ENCODE measurements at regions of chr18 and their contacts with region 1.

Region 1: DNA sequence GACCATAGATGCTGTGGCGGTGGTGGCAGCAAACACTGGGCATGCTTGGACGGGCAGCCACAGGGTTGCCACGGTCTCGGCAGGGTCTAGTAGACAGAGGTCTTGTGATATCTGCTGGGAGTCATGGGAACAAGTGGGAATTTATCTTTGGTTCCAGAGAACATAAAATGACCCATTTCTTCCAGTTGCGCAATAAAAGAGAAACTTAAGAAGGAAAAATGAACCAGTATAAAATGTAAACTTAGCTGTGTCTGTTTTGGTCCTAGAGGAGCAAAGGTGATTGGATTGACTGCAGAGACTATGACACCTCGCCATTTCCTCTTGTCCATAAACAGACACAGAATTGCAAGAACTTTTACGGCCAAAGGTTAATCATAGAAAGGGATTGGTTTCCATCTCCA is 132.6 kb upstream of the RBBP8 start:
- DNase-seq: no peak
- ATAC-seq: no peak
- H3K4me3 ChIP-seq: no peak overlapping the region
- H3K4me3 Mint-ChIP-seq: no peak overlapping the region
- H3K27ac ChIP-seq: no peak overlapping the region
- H3K27ac Mint-ChIP-seq: no peak overlapping the region
- H3K4me1 ChIP-seq: no peaks in the 10 kb centered on the region
- H3K4me1 Mint-ChIP-seq: no peaks in the 10 kb centered on the region
- H3K27me3 ChIP-seq: no peaks in the 10 kb centered on the region
- H3K27me3 Mint-ChIP-seq: peaks cover 6% of the 10 kb centered on the region
- CTCF ChIP-seq: no peak

Region 2: DNA sequence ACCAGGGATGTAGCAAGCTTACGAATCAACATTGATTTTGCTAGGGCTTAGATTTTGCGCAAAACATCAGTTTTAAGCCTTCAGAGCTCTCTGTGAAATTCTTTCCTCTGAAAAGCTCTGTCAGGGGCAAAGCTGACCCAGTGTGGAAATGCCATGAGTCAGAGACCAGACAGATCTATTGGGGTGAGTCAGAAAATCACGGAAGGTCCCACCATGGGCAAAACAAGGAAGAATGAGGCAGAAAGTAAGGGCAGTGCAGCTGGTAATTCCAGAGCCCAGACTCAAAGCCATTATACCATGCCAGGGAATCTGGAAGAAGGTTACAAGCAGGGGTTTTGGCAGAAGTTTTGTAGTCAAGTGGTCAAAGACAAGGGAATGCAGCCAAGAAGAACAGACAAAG is 126.3 kb before region 1 on chr18:
- CTCF ChIA-PET with region 1: no interaction called
- POLR2A ChIA-PET with region 1: no interaction called
- intact Hi-C with region 1: no loop called
- DNase-seq: no peak
- ATAC-seq: no peak
- H3K4me3 ChIP-seq: no peak overlapping the region
- H3K4me3 Mint-ChIP-seq: no peak overlapping the region
- H3K27ac ChIP-seq: no peak overlapping the region
- H3K27ac Mint-ChIP-seq: no peak overlapping the region
- H3K4me1 ChIP-seq: no peaks in the 10 kb centered on the region
- H3K4me1 Mint-ChIP-seq: no peaks in the 10 kb centered on the region
- H3K27me3 ChIP-seq: no peaks in the 10 kb centered on the region
- H3K27me3 Mint-ChIP-seq: no peaks in the 10 kb centered on the region
- CTCF ChIP-seq: no peak

Region 3: DNA sequence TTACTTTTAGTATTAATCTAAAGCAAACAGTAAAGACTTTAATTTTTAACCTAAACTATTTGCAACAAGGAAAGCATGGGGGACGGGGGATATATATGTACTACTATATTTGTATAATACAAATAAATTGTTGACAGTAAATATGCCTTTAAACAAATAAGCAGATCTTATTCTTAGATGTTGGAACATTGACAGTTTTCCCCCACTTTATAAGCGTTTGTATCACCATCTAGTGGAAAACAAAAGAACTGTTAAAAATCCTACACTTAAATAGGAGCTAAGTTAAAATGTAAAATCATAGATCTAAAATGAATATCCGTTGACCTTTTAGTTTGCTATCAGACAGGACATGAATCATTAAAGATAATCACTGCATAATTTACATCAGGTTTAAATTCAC is 182.6 kb after region 1 on chr18:
- CTCF ChIA-PET with region 1: interaction called, 9 read pairs
- POLR2A ChIA-PET with region 1: no interaction called
- intact Hi-C with region 1: loop called (anchors 1 to 2 kb)
- DNase-seq: peak in 2 of 9 experiments; percentile 22 to 50
- ATAC-seq: no peak
- H3K4me3 ChIP-seq: no peak overlapping the region
- H3K4me3 Mint-ChIP-seq: no peak overlapping the region
- H3K27ac ChIP-seq: no peak overlapping the region
- H3K27ac Mint-ChIP-seq: no peak overlapping the region
- H3K4me1 ChIP-seq: no peaks in the 10 kb centered on the region
- H3K4me1 Mint-ChIP-seq: no peaks in the 10 kb centered on the region
- H3K27me3 ChIP-seq: no peaks in the 10 kb centered on the region
- H3K27me3 Mint-ChIP-seq: no peaks in the 10 kb centered on the region
- CTCF ChIP-seq: peak; percentile 65

Region 4: GRCh38 chr18:23406271-23406787 is 605.8 kb after region 1 on chr18:
- CTCF ChIA-PET with region 1: interaction called, 22 read pairs
- POLR2A ChIA-PET with region 1: no interaction called
- intact Hi-C with region 1: loop called in 1 of 2 experiments (anchors 1 kb)
- DNase-seq: no peak
- ATAC-seq: no peak
- H3K4me3 ChIP-seq: no peak overlapping the region
- H3K4me3 Mint-ChIP-seq: no peak overlapping the region
- H3K27ac ChIP-seq: no peak overlapping the region
- H3K27ac Mint-ChIP-seq: no peak overlapping the region
- H3K4me1 ChIP-seq: no peaks in the 10 kb centered on the region
- H3K4me1 Mint-ChIP-seq: no peaks in the 10 kb centered on the region
- H3K27me3 ChIP-seq: no peaks in the 10 kb centered on the region
- H3K27me3 Mint-ChIP-seq: no peaks in the 10 kb centered on the region
- CTCF ChIP-seq: no peak

Region 5: GRCh38 chr18:23412351-23412964 is 611.9 kb after region 1 on chr18:
- CTCF ChIA-PET with region 1: interaction called, 22 read pairs
- POLR2A ChIA-PET with region 1: no interaction called
- intact Hi-C with region 1: loop called in 1 of 2 experiments (anchors 1 kb)
- DNase-seq: no peak
- ATAC-seq: no peak
- H3K4me3 ChIP-seq: no peak overlapping the region
- H3K4me3 Mint-ChIP-seq: no peak overlapping the region
- H3K27ac ChIP-seq: no peak overlapping the region
- H3K27ac Mint-ChIP-seq: no peak overlapping the region
- H3K4me1 ChIP-seq: no peaks in the 10 kb centered on the region
- H3K4me1 Mint-ChIP-seq: no peaks in the 10 kb centered on the region
- H3K27me3 ChIP-seq: no peaks in the 10 kb centered on the region
- H3K27me3 Mint-ChIP-seq: no peaks in the 10 kb centered on the region
- CTCF ChIP-seq: no peak

Region 6: GRCh38 chr18:23812546-23813440 is 1012.2 kb after region 1 on chr18:
- CTCF ChIA-PET with region 1: no interaction called
- POLR2A ChIA-PET with region 1: no interaction called
- intact Hi-C with region 1: loop called in 1 of 2 experiments (anchors 5 kb)
- DNase-seq: peak in 2 of 9 experiments; percentile 45 to 59
- ATAC-seq: no peak
- H3K4me3 ChIP-seq: no peak overlapping the region
- H3K4me3 Mint-ChIP-seq: no peak overlapping the region
- H3K27ac ChIP-seq: no peak overlapping the region
- H3K27ac Mint-ChIP-seq: no peak overlapping the region
- H3K4me1 ChIP-seq: peaks cover 19% of the 10 kb centered on the region
- H3K4me1 Mint-ChIP-seq: peaks cover 30% of the 10 kb centered on the region
- H3K27me3 ChIP-seq: no peaks in the 10 kb centered on the region
- H3K27me3 Mint-ChIP-seq: no peaks in the 10 kb centered on the region
- CTCF ChIP-seq: peak; percentile 67

Measured in CD8-positive, alpha-beta T cell (primary cell).